ENCODE measurements at regions of chr11 and their contacts with region 1.

Region 1: GRCh38 chr11:65700391-65700790 is 11.7 kb upstream of the KAT5 start:
- DNase-seq: no peak
- ATAC-seq: no peak
- H3K4me3 Mint-ChIP-seq: no peak overlapping the region
- H3K27ac Mint-ChIP-seq: no peak overlapping the region
- H3K4me1 Mint-ChIP-seq: no peaks in the 10 kb centered on the region
- H3K27me3 Mint-ChIP-seq: peaks cover 21% of the 10 kb centered on the region

Region 2: GRCh38 chr11:65720237-65720934 is 20.0 kb after region 1 on chr11 and contains the start of gene RNASEH2C:
- CTCF ChIA-PET with region 1: interaction called, 10 read pairs
- POLR2A ChIA-PET with region 1: no interaction called
- DNase-seq: peak; percentile 87
- ATAC-seq: peak; percentile 92
- H3K4me3 Mint-ChIP-seq: peak within 1 kb of the TSS; percentile 95
- H3K27ac Mint-ChIP-seq: peak within 1 kb of the TSS; percentile 89
- H3K4me1 Mint-ChIP-seq: peaks cover 36% of the 10 kb centered on the region
- H3K27me3 Mint-ChIP-seq: peaks cover 2% of the 10 kb centered on the region
- total RNA-seq, gene RNASEH2C: 88.0 to 92.3 TPM

Region 3: GRCh38 chr11:66207876-66208275 is 507.5 kb after region 1 on chr11:
- CTCF ChIA-PET with region 1: no interaction called
- POLR2A ChIA-PET with region 1: no interaction called
- DNase-seq: no peak
- ATAC-seq: no peak
- H3K4me3 Mint-ChIP-seq: no peak overlapping the region
- H3K27ac Mint-ChIP-seq: no peak overlapping the region
- H3K4me1 Mint-ChIP-seq: no peaks in the 10 kb centered on the region
- H3K27me3 Mint-ChIP-seq: no peaks in the 10 kb centered on the region